AG04450 (cell line): ENCODE measurements at regions of chr4 and their contacts with region 1.

Region 1: GRCh38 chr4:70651864-70652506 is 14.3 kb downstream of the JCHAIN start:
- DNase-seq: no peak
- H3K4me3 ChIP-seq: no peak overlapping the region
- H3K27ac ChIP-seq: no peak overlapping the region
- H3K27me3 ChIP-seq: no peaks in the 10 kb centered on the region
- CTCF ChIP-seq: peak; percentile 54

Region 2: DNA sequence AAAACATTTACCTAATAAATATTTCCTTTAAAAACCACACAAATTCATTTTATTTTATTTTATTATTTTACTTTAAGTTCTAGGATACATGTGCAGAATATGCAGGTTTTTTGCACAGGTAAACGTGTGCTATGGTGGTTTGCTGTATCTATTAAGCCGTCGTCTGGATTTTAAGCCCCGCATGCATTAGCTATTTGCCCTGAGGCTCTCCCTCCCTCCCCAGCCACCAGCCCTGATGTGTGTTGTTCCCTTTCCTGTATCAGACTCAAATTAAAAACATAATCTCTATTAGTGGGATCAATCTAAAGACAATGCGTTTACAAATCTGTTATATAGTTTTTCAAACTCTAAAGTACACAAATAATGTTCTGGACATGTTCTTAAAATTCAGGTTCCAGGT is 625.0 kb before region 1 on chr4:
- CTCF ChIA-PET with region 1: no interaction called
- POLR2A ChIA-PET with region 1: no interaction called
- DNase-seq: no peak
- H3K4me3 ChIP-seq: no peak overlapping the region
- H3K27ac ChIP-seq: no peak overlapping the region
- H3K27me3 ChIP-seq: no peaks in the 10 kb centered on the region
- CTCF ChIP-seq: no peak

Region 3: GRCh38 chr4:70629469-70630090 is 22.4 kb before region 1 on chr4:
- CTCF ChIA-PET with region 1: interaction called, 12 read pairs
- POLR2A ChIA-PET with region 1: no interaction called
- DNase-seq: no peak
- H3K4me3 ChIP-seq: no peak overlapping the region
- H3K27ac ChIP-seq: no peak overlapping the region
- H3K27me3 ChIP-seq: no peaks in the 10 kb centered on the region
- CTCF ChIP-seq: no peak

Region 4: GRCh38 chr4:70666369-70666768 is 14.4 kb after region 1 on chr4 and contains the start of gene JCHAIN:
- CTCF ChIA-PET with region 1: interaction called, 30 read pairs
- POLR2A ChIA-PET with region 1: no interaction called
- DNase-seq: no peak
- H3K4me3 ChIP-seq: no peak within 1 kb of the TSS
- H3K27ac ChIP-seq: no peak within 1 kb of the TSS
- H3K27me3 ChIP-seq: no peaks in the 10 kb centered on the region
- CTCF ChIP-seq: no peak
- polyA plus RNA-seq, gene JCHAIN: 0.61 and 1.1 TPM in 2 replicates

Region 5: DNA sequence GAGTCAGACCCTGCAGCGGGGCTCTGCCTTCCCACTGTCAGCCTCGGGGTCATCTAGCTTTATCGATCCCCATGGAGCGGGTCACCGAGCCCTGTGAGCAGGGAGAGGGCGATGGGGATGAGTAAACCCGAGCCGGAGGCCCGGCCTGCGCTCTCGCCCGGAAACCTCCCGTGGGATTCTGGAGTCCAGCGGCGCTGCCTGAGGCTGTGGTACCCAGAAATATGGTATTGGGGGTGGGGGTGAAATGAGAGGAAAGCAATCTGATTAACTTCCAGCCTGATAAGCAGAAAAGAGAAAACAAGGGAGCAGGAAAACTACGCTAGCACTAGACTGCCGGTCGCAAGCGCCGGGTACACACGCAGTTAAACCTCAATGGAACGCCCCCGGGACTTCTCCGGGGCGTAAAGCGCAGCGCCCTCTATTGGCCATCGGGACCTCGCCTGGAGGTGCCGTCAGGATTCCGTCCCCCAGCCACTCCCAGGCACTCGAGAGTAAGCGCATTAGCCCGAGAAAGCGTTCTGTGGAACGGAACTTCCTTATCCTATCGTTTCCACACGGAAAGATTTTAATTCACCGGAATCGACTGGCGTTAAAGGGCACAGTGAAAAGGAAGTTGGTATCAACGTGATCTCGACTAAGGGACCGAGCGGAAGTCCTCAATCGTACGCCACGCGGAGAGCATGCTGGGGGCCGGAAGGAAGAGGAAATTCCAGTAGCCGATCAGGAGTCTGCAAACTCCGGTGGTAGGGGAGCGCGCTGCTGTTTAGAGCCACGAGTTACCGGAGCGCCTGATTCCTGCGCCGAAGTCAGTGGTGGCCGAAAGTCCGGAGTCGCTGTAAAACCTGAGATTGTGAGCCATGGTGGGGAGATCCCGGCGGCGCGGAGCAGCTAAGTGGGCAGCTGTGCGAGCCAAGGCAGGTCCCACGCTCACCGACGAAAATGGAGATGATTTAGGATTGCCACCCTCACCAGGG is 36.1 kb after region 1 on chr4 and contains the start of gene UTP3:
- CTCF ChIA-PET with region 1: interaction called, 15 read pairs
- POLR2A ChIA-PET with region 1: no interaction called
- DNase-seq: peak; percentile 98
- H3K4me3 ChIP-seq: peak within 1 kb of the TSS; percentile 100
- H3K27ac ChIP-seq: peak within 1 kb of the TSS; percentile 95
- H3K27me3 ChIP-seq: no peaks in the 10 kb centered on the region
- CTCF ChIP-seq: peak; percentile 97
- polyA plus RNA-seq, gene UTP3: 24.3 and 27.1 TPM in 2 replicates

Region 6: GRCh38 chr4:71009890-71010588 is 358.1 kb after region 1 on chr4:
- CTCF ChIA-PET with region 1: interaction called, 29 read pairs
- POLR2A ChIA-PET with region 1: no interaction called
- DNase-seq: no peak
- H3K4me3 ChIP-seq: no peak overlapping the region
- H3K27ac ChIP-seq: no peak overlapping the region
- H3K27me3 ChIP-seq: no peaks in the 10 kb centered on the region
- CTCF ChIP-seq: peak; percentile 68